Activated T-helper 2 cell treated with anti-CD3 and anti-CD28 coated beads, Interferon-gamma antibody, Interleukin-2, Interleukin-4, amounts not matched to agents 10 μg/mL and 5 μg/mL and 100 μg/mL, durations not matched to agents 14 hours and 24 hours and 36 hours (primary cell): ENCODE measurements at regions of chr16 and their contacts with region 1.

Region 1: DNA sequence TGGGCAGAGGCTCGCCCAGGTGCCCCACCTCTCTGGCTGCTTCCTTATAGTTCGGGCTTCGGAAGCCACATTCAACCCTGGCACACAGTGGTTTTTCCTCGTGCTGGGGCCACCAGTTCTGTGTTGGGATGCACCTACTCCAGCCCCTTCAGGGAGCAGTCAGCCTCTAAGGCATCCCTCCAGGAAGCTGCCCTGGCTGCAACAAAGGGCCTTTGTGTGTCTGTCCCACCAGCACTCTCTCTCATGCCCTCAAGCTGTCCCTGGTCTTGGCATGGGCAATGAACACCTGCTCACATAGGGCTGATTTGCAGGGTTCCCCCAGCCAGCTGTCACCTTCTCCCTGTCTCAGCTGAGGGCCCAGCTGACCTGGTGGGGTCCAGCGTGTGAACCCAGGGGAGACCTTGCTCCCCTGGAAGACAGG is 754 bp upstream of the NOXO1 start:
- DNase-seq: no peak
- H3K4me3 Mint-ChIP-seq: no peak overlapping the region
- H3K27ac Mint-ChIP-seq: no peak overlapping the region
- H3K4me1 Mint-ChIP-seq: peaks cover 5% of the 10 kb centered on the region
- H3K27me3 Mint-ChIP-seq: peaks cover 30% of the 10 kb centered on the region

Region 2: GRCh38 chr16:1782352-1783091 is 199.5 kb before region 1 on chr16 and contains the starts of genes NUBP2 and SPSB3:
- intact Hi-C with region 1: no loop called
- DNase-seq: peak; percentile 99
- H3K4me3 Mint-ChIP-seq: peak within 1 kb of the TSS; percentile 90
- H3K27ac Mint-ChIP-seq: peak within 1 kb of the TSS; percentile 83
- H3K4me1 Mint-ChIP-seq: peaks cover 11% of the 10 kb centered on the region
- H3K27me3 Mint-ChIP-seq: no peaks in the 10 kb centered on the region
- total RNA-seq, gene NUBP2: 64.5 and 66.7 TPM in 2 replicates
- total RNA-seq, gene SPSB3: 27.1 and 28.3 TPM in 2 replicates

Region 3: GRCh38 chr16:1863681-1864460 is 118.2 kb before region 1 on chr16:
- intact Hi-C with region 1: no loop called
- DNase-seq: no peak
- H3K4me3 Mint-ChIP-seq: no peak overlapping the region
- H3K27ac Mint-ChIP-seq: no peak overlapping the region
- H3K4me1 Mint-ChIP-seq: peaks cover 1% of the 10 kb centered on the region
- H3K27me3 Mint-ChIP-seq: peaks cover 16% of the 10 kb centered on the region

Region 4: GRCh38 chr16:1971796-1972489 is 10.1 kb before region 1 on chr16 and contains the start of gene TBL3:
- intact Hi-C with region 1: loop called (anchors 1 kb)
- DNase-seq: peak; percentile 96
- H3K4me3 Mint-ChIP-seq: peak within 1 kb of the TSS; percentile 91
- H3K27ac Mint-ChIP-seq: peak within 1 kb of the TSS; percentile 95
- H3K4me1 Mint-ChIP-seq: peaks cover 16% of the 10 kb centered on the region
- H3K27me3 Mint-ChIP-seq: no peaks in the 10 kb centered on the region
- total RNA-seq, gene TBL3: 64.2 and 72.5 TPM in 2 replicates

Region 5: DNA sequence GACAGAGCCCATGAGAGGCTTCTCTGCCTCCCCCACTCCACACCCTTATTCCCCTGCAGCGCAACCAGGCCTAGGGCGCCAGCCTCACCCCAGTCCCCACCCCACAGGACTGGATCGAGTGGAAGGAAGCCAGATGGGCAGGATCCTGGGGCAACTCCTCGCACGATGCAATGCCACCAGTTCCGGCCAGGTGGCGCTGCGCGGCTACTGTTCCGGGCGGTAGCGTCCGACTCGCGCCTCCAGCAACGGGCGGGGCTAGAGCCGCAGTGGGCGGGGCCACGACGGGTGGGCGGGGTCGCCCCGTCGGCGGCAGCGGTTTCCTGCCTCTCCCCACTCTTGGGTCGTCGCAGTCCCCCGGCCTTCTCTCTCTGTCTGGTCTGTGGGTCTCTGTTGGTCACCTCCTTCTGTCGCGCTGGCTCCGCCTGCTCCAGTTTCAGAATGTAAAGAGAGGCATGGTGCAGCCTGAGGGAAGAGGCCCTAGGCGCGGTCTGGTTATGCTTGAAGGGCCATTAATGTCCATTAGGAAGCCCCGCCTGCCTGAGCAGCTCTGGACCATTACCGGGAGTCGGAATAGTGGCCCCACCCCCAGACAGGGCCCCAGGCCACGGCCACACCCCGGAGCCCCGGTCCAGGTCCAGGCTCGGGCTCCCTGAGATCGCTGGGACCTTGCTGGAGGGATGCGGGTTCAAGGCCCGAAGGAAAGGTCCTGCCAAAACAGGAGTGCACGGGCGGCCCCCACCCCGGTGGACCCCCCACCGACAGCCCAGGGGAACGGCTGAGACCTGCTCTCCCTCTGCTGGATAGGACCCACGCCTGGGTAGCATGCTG is 41.3 kb after region 1 on chr16:
- intact Hi-C with region 1: no loop called
- DNase-seq: peak; percentile 90
- H3K4me3 Mint-ChIP-seq: peak overlapping the region; percentile 73
- H3K27ac Mint-ChIP-seq: peak overlapping the region; percentile 28
- H3K4me1 Mint-ChIP-seq: peaks cover 16% of the 10 kb centered on the region
- H3K27me3 Mint-ChIP-seq: peaks cover 42% of the 10 kb centered on the region